ENCODE measurements at regions of chr13 and their contacts with region 1.

Region 1: GRCh38 chr13:50635504-50635903 is 208.0 kb downstream of the DLEU7 start:
- DNase-seq: peak; percentile 98 to 100 (median 99)
- H3K4me3 ChIP-seq: no peak overlapping the region
- H3K4me3 Mint-ChIP-seq: peak overlapping the region in 1 of 2 donors; percentile 46
- H3K27ac ChIP-seq: peak overlapping the region; percentile 100
- H3K27ac Mint-ChIP-seq: peak overlapping the region; percentile 95 to 100 (median 99)
- H3K4me1 ChIP-seq: peaks cover 48 to 60% of the 10 kb centered on the region in 2 donors
- H3K4me1 Mint-ChIP-seq: peaks cover 49% of the 10 kb centered on the region
- H3K27me3 ChIP-seq: no peaks in the 10 kb centered on the region
- H3K27me3 Mint-ChIP-seq: no peaks in the 10 kb centered on the region
- CTCF ChIP-seq: no peak

Region 2: GRCh38 chr13:50208826-50209335 is 426.6 kb before region 1 on chr13:
- intact Hi-C with region 1: loop called in 1 of 2 experiments (anchors 5 kb)
- DNase-seq: peak; percentile 78 to 89 (median 86)
- H3K4me3 ChIP-seq: peak overlapping the region; percentile 53 to 80 (median 57)
- H3K4me3 Mint-ChIP-seq: peak overlapping the region; percentile 89 to 98
- H3K27ac ChIP-seq: peak overlapping the region; percentile 93 to 94
- H3K27ac Mint-ChIP-seq: peak overlapping the region; percentile 95 to 100 (median 98)
- H3K4me1 ChIP-seq: peaks cover 25 to 31% of the 10 kb centered on the region in 2 donors
- H3K4me1 Mint-ChIP-seq: peaks cover 33% of the 10 kb centered on the region
- H3K27me3 ChIP-seq: no peaks in the 10 kb centered on the region
- H3K27me3 Mint-ChIP-seq: no peaks in the 10 kb centered on the region
- CTCF ChIP-seq: no peak

Region 3: DNA sequence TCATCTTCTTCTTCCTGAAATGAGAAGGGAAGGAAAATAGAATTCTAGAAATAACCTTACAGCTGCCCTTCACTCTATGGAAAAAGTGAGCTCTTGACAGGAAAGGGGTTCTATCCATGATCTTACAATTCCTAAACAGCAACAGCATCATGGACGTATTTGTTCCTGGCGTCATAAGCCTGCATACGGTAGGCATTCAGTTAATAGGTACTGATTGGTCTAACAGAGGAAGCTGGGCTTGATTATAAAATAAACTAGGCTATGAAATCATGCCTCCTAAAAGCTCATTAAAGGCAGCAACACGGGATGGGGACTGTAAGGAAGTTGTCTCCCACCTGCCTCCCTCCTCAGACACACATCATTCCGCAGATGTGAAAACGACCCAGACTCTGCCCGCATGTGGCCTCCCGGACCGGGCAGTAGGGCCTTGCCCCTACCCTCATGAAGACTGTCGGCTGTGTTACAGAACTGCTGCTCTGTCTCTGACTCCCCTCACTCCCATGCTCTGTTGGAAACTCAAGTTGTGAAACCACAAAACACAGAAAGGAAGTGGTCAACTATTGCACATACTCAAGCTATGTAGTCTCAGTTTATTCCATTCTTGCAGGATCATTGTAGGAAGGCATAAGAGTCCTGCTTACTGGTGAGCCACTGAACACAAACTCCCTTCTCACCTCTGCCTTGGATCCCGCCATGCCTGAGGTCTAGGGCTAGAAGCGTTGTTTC is 78.2 kb after region 1 on chr13:
- intact Hi-C with region 1: loop called (anchors 5 to 10 kb)
- DNase-seq: peak; percentile 86 to 95 (median 93)
- H3K4me3 ChIP-seq: peak overlapping the region; percentile 34 to 80 (median 77)
- H3K4me3 Mint-ChIP-seq: peak overlapping the region; percentile 82 to 89
- H3K27ac ChIP-seq: peak overlapping the region; percentile 79 to 91
- H3K27ac Mint-ChIP-seq: peak overlapping the region; percentile 94 to 99 (median 98)
- H3K4me1 ChIP-seq: peaks cover 58 to 65% of the 10 kb centered on the region in 2 donors
- H3K4me1 Mint-ChIP-seq: peaks cover 75% of the 10 kb centered on the region
- H3K27me3 ChIP-seq: no peaks in the 10 kb centered on the region
- H3K27me3 Mint-ChIP-seq: no peaks in the 10 kb centered on the region
- CTCF ChIP-seq: no peak